ENCODE measurements at regions of chr5 and their contacts with region 1.

Region 1: GRCh38 chr5:141223112-141223783 is at the start of gene PCDHB14:
- DNase-seq: peak; percentile 78
- H3K4me3 ChIP-seq: peak within 1 kb of the TSS; percentile 59 to 80
- H3K27ac ChIP-seq: peak within 1 kb of the TSS; percentile 29 to 74; a peak in 2 of 4 replicates
- H3K4me1 ChIP-seq: peaks cover 0 to 2% of the 10 kb centered on the region in 2 experiments; a peak in 2 of 4 replicates
- H3K27me3 ChIP-seq: no peaks in the 10 kb centered on the region
- CTCF ChIP-seq: peak; percentile 65
- EP300 ChIP-seq: no peak
- RAD21 ChIP-seq: peak; percentile 81
- polyA plus RNA-seq, gene PCDHB14: 9.7 and 10.6 TPM in 2 replicates

Region 2: GRCh38 chr5:141234109-141234667 is 10.9 kb after region 1 on chr5:
- CTCF ChIA-PET with region 1: interaction called, 21 read pairs
- POLR2A ChIA-PET with region 1: interaction called, 3 read pairs
- DNase-seq: no peak
- H3K4me3 ChIP-seq: peak overlapping the region; percentile 11 to 33; a peak in 3 of 4 replicates
- H3K27ac ChIP-seq: no peak overlapping the region
- H3K4me1 ChIP-seq: no peaks in the 10 kb centered on the region
- H3K27me3 ChIP-seq: no peaks in the 10 kb centered on the region
- CTCF ChIP-seq: peak; percentile 46
- EP300 ChIP-seq: no peak
- RAD21 ChIP-seq: peak; percentile 49

Region 3: GRCh38 chr5:141303756-141304155 is 80.5 kb after region 1 on chr5 and contains the start of gene SLC25A2:
- CTCF ChIA-PET with region 1: no interaction called
- POLR2A ChIA-PET with region 1: no interaction called
- DNase-seq: no peak
- H3K4me3 ChIP-seq: no peak within 1 kb of the TSS; a peak in 1 of 4 replicates
- H3K27ac ChIP-seq: no peak within 1 kb of the TSS
- H3K4me1 ChIP-seq: no peaks in the 10 kb centered on the region
- H3K27me3 ChIP-seq: no peaks in the 10 kb centered on the region
- CTCF ChIP-seq: no peak
- EP300 ChIP-seq: no peak
- RAD21 ChIP-seq: no peak
- polyA plus RNA-seq, gene SLC25A2: not detected in 2 replicates

Region 4: GRCh38 chr5:141320225-141321169 is 97.2 kb after region 1 on chr5 and contains the start of gene TAF7:
- CTCF ChIA-PET with region 1: interaction called, 15 read pairs
- POLR2A ChIA-PET with region 1: interaction called, 3 read pairs
- DNase-seq: peak; percentile 94
- H3K4me3 ChIP-seq: peak within 1 kb of the TSS; percentile 80 to 92
- H3K27ac ChIP-seq: peak within 1 kb of the TSS; percentile 96 to 98
- H3K4me1 ChIP-seq: no peaks in the 10 kb centered on the region; a peak in 1 of 4 replicates
- H3K27me3 ChIP-seq: no peaks in the 10 kb centered on the region
- CTCF ChIP-seq: peak; percentile 90
- EP300 ChIP-seq: 0 out of 4 replicates have a peak, but pooled peaks of 1 of the 2 experiments have one; percentile 31
- RAD21 ChIP-seq: peak; percentile 60
- polyA plus RNA-seq, gene TAF7: 30.6 and 38.7 TPM in 2 replicates